ENCODE measurements at regions of chr2 and their contacts with region 1.

Region 1: DNA sequence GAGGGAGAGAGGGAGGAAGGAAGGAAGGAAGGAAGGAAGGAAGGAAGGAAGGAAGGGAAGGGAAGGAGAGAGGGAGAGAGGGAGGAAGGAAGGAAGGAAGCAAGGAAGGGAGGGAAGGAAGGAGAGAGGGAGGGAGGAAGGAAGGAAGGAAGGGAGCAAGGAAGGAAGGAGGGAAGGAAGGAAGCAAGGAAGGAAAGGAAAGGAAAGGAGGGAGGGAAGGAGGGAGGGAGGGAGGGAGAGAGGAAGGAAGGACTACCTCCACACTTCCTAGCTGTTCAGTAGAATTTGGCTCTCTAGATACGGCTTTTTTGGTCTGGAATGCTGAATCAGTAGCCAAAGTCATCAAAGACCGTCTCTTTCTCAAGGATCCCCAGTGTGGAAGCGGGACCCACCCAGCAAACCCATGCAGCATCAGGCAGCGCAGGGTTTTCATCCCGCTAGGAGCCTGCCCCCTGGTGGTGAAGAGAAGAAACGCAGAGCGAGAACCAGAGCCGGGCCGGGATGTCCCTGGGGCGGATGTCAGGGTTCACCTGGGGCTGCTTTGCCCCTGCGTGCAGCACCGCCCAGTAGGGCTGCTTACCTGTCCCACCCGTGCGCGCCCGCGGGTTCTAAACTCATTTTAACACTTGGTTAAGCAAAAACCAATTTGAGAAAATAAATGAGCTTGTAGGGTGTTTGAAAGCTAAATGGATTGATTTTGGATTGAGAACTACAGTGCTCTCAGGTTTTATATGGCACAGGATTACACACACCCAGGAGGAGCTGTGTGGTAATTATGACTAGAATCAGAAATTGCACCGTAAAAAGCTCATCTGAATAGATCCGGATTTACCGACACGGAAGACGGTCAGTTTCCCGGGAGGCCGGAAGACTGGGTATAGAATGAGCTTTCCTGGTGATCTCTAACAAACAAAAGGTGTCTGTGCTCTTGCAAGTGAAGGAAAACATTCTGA is 48.1 kb upstream of the ARL4C start:
- DNase-seq: peak; percentile 46 to 64 (median 61)
- ATAC-seq: peak; percentile 86
- H3K4me3 ChIP-seq: no peak overlapping the region
- H3K27ac ChIP-seq: no peak overlapping the region
- H3K4me1 ChIP-seq: no peaks in the 10 kb centered on the region; a peak in 1 of 5 replicates
- H3K27me3 ChIP-seq: no peaks in the 10 kb centered on the region; a peak in 1 of 5 replicates
- CTCF ChIP-seq: peak; percentile 63 to 68 (median 63)
- EP300 ChIP-seq: no peak
- POLR2A ChIP-seq: no peak
- RAD21 ChIP-seq: peak; percentile 29 to 61; a peak in 3 of 4 replicates

Region 2: DNA sequence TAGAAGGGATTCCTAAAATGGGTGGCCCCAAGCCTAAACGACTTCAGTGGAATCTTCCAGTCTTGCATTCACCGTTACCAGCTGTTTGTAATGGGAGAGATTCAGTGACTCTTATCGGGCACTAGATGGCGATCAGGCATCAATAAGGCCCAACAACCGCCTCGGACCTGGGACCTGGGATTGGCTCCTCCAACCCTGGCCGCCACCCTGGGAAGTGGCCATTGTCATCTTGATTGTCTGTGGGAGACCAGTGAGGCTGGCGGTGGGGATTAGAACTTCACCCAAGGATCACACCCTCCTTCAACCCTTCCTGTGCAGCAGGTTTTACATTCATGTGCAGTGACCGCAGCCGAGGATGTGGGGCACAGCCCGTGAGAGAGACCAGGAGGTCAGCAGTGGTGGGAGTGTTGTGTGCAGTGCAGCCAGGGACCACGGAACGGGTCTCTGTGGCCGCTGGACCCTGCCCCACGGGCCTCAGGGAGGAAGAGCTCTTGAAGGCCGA is 409.2 kb before region 1 on chr2:
- CTCF ChIA-PET with region 1: no interaction called
- POLR2A ChIA-PET with region 1: no interaction called
- in situ Hi-C with region 1: no loop called
- intact Hi-C with region 1: loop called (anchors 10 kb)
- DNase-seq: peak; percentile 36 to 53 (median 42)
- ATAC-seq: peak; percentile 82
- H3K4me3 ChIP-seq: no peak overlapping the region
- H3K27ac ChIP-seq: no peak overlapping the region
- H3K4me1 ChIP-seq: no peaks in the 10 kb centered on the region; a peak in 1 of 5 replicates
- H3K27me3 ChIP-seq: peaks cover 0 to 9% of the 10 kb centered on the region in 2 experiments; a peak in 1 of 5 replicates
- CTCF ChIP-seq: peak; percentile 45 to 57 (median 54)
- EP300 ChIP-seq: no peak
- POLR2A ChIP-seq: no peak
- RAD21 ChIP-seq: peak; percentile 48 to 59

Region 3: GRCh38 chr2:234478121-234478858 is 66.6 kb before region 1 on chr2:
- CTCF ChIA-PET with region 1: no interaction called
- POLR2A ChIA-PET with region 1: no interaction called
- in situ Hi-C with region 1: no loop called
- intact Hi-C with region 1: loop called (anchors 10 kb)
- DNase-seq: no peak
- ATAC-seq: no peak
- H3K4me3 ChIP-seq: no peak overlapping the region
- H3K27ac ChIP-seq: no peak overlapping the region
- H3K4me1 ChIP-seq: no peaks in the 10 kb centered on the region
- H3K27me3 ChIP-seq: peaks cover 0 to 7% of the 10 kb centered on the region in 2 experiments; a peak in 2 of 5 replicates
- CTCF ChIP-seq: no peak
- EP300 ChIP-seq: no peak
- POLR2A ChIP-seq: no peak
- RAD21 ChIP-seq: no peak

Region 4: GRCh38 chr2:235106874-235107639 is 562.1 kb after region 1 on chr2:
- CTCF ChIA-PET with region 1: no interaction called
- POLR2A ChIA-PET with region 1: no interaction called
- in situ Hi-C with region 1: loop called (anchors 10 kb)
- intact Hi-C with region 1: no loop called
- DNase-seq: peak; percentile 9 to 29 (median 19)
- ATAC-seq: 0 out of 3 replicates have a peak, but pooled peaks have one; percentile 46
- H3K4me3 ChIP-seq: no peak overlapping the region
- H3K27ac ChIP-seq: no peak overlapping the region
- H3K4me1 ChIP-seq: no peaks in the 10 kb centered on the region
- H3K27me3 ChIP-seq: peaks cover 0 to 16% of the 10 kb centered on the region in 2 experiments; a peak in 2 of 5 replicates
- CTCF ChIP-seq: peak; percentile 23 to 44 (median 37); a peak in 3 of 6 replicates
- EP300 ChIP-seq: no peak
- POLR2A ChIP-seq: no peak
- RAD21 ChIP-seq: peak in 1 of 2 experiments; percentile 52; a peak in 2 of 4 replicates

Measured in K562 (cell line).